Activated naive CD4-positive, alpha-beta T cell treated with anti-CD3 and anti-CD28 coated beads, Interleukin-2, amount 10 ng/mL, durations not matched to agents 7 days and 5 days (primary cell): ENCODE measurements at regions of chr14 and their contacts with region 1.

Region 1: DNA sequence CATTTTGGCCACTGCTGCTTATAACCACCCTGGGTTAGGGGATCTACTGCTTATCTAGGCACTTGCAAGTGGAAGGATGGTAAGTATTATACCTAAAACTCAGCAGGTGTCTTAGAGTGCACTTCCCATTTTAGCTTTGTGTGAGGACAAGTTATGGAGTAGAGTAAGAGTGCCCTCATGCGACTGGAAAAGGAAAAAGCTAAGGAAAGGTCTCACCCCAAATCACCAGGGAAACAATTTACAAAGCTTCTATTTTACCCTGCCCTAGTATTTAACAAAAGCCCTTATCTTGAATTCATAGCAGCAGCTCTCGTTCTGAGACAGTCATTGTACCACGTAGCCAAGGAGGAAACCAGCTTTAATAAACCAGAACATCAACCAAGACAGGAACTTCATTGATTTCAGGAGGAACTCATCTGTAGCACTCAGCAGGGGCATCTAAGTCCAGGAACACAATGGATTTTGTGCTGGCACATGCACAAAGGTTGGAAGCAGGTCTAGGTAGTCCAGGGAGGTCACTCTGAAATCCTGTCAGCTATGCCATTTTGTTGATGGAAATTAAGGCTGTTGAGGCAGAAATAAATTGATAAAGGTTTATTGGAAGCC is 2.9 kb downstream of the RDH12 start:
- DNase-seq: peak; percentile 50
- H3K4me3 Mint-ChIP-seq: no peak overlapping the region
- H3K27ac Mint-ChIP-seq: no peak overlapping the region
- H3K4me1 Mint-ChIP-seq: no peaks in the 10 kb centered on the region
- H3K27me3 Mint-ChIP-seq: peaks cover 4% of the 10 kb centered on the region

Region 2: GRCh38 chr14:67571272-67571850 is 133.2 kb before region 1 on chr14:
- CTCF ChIA-PET with region 1: interaction called, 18 read pairs
- DNase-seq: peak; percentile 81
- H3K4me3 Mint-ChIP-seq: no peak overlapping the region
- H3K27ac Mint-ChIP-seq: no peak overlapping the region
- H3K4me1 Mint-ChIP-seq: no peaks in the 10 kb centered on the region
- H3K27me3 Mint-ChIP-seq: peaks cover 16% of the 10 kb centered on the region

Region 3: DNA sequence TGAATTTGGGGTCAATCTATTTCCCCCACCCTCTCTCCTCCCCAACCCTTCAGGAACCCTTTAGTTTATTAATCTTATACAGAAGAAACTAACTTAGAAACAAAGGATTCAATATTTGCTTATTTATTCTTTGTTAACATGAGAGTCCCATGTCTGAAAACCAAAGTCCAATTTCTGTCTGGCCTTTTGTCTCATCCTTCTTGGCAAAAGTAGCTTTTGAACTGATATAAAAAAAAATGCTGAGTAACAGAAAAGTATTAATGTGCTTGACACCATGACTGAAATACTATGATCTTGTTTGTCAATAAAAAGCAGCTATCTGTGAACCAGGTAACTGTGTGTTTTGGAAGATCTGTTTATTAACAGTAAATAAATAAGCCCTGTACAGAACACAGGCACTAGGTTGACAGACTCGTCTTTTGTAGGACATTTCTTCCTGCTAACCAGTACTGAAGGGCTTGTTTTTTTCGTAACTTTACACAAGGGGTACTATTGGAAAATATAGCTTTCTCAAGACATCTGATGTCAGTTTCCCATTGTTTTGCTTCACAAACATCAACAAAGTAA is 115.3 kb before region 1 on chr14:
- CTCF ChIA-PET with region 1: interaction called, 51 read pairs
- DNase-seq: no peak
- H3K4me3 Mint-ChIP-seq: no peak overlapping the region
- H3K27ac Mint-ChIP-seq: no peak overlapping the region
- H3K4me1 Mint-ChIP-seq: no peaks in the 10 kb centered on the region
- H3K27me3 Mint-ChIP-seq: no peaks in the 10 kb centered on the region

Region 4: GRCh38 chr14:67666750-67667449 is 37.7 kb before region 1 on chr14:
- CTCF ChIA-PET with region 1: interaction called, 28 read pairs
- DNase-seq: peak; percentile 45
- H3K4me3 Mint-ChIP-seq: no peak overlapping the region
- H3K27ac Mint-ChIP-seq: no peak overlapping the region
- H3K4me1 Mint-ChIP-seq: peaks cover 32% of the 10 kb centered on the region
- H3K27me3 Mint-ChIP-seq: no peaks in the 10 kb centered on the region